Psoas muscle (tissue), 8 donors: ENCODE measurements at regions of chr2 and their contacts with region 1.

Region 1: GRCh38 chr2:68196120-68196716 is 38.5 kb downstream of the PNO1 start:
- DNase-seq: no peak
- ATAC-seq: peak in 2 of 4 donors; percentile 25 to 44
- H3K4me3 ChIP-seq: no peak overlapping the region
- H3K27ac ChIP-seq: no peak overlapping the region
- H3K4me1 ChIP-seq: peaks cover 66% of the 10 kb centered on the region
- H3K27me3 ChIP-seq: no peaks in the 10 kb centered on the region
- CTCF ChIP-seq: peak; percentile 84

Region 2: GRCh38 chr2:68282811-68283418 is 86.7 kb after region 1 on chr2:
- intact Hi-C with region 1: loop called in 1 of 2 experiments (anchors 2 kb)
- DNase-seq: no peak
- ATAC-seq: peak in 3 of 4 donors; percentile 57 to 76 (median 64)
- H3K4me3 ChIP-seq: no peak overlapping the region
- H3K27ac ChIP-seq: no peak overlapping the region
- H3K4me1 ChIP-seq: peaks cover 37% of the 10 kb centered on the region
- H3K27me3 ChIP-seq: no peaks in the 10 kb centered on the region
- CTCF ChIP-seq: peak; percentile 79